ENCODE measurements at regions of chr1 and their contacts with region 1.

Region 1: GRCh38 chr1:12434174-12434573 is 183.8 kb downstream of the DHRS3 start:
- DNase-seq: peak; percentile 70
- H3K4me3 Mint-ChIP-seq: peak overlapping the region; percentile 32
- H3K27ac Mint-ChIP-seq: peak overlapping the region; percentile 92
- H3K4me1 Mint-ChIP-seq: peaks cover 67% of the 10 kb centered on the region
- H3K27me3 Mint-ChIP-seq: peaks cover 3% of the 10 kb centered on the region

Region 2: GRCh38 chr1:12040457-12041051 is 393.6 kb before region 1 on chr1:
- intact Hi-C with region 1: loop called (anchors 1 kb)
- DNase-seq: no peak
- H3K4me3 Mint-ChIP-seq: no peak overlapping the region
- H3K27ac Mint-ChIP-seq: peak overlapping the region; percentile 29
- H3K4me1 Mint-ChIP-seq: peaks cover 48% of the 10 kb centered on the region
- H3K27me3 Mint-ChIP-seq: no peaks in the 10 kb centered on the region

Region 3: DNA sequence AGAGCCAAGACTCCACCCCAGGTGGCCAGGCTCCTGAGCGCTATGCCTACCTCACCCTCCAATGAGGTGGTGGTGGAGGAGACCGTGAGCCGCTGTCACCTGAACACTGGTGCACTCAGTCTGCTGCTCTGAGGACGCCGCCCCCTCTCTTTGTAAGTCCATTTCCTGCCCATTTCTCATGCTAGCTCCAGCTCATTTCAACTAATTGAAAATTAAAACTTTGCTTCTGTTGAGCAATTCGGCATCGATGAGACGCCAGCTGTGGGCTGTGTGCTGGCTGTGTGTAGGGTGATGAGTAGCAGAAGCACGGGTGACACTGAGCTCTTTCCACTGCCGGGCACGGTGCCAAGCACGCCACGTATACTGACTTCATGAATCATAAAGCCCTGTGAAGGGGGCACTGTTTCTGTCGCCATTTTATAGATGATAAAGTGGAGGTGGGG is 256.2 kb before region 1 on chr1:
- intact Hi-C with region 1: loop called (anchors 5 kb)
- DNase-seq: peak; percentile 62
- H3K4me3 Mint-ChIP-seq: peak overlapping the region; percentile 79
- H3K27ac Mint-ChIP-seq: peak overlapping the region; percentile 96
- H3K4me1 Mint-ChIP-seq: peaks cover 84% of the 10 kb centered on the region
- H3K27me3 Mint-ChIP-seq: no peaks in the 10 kb centered on the region

Region 4: DNA sequence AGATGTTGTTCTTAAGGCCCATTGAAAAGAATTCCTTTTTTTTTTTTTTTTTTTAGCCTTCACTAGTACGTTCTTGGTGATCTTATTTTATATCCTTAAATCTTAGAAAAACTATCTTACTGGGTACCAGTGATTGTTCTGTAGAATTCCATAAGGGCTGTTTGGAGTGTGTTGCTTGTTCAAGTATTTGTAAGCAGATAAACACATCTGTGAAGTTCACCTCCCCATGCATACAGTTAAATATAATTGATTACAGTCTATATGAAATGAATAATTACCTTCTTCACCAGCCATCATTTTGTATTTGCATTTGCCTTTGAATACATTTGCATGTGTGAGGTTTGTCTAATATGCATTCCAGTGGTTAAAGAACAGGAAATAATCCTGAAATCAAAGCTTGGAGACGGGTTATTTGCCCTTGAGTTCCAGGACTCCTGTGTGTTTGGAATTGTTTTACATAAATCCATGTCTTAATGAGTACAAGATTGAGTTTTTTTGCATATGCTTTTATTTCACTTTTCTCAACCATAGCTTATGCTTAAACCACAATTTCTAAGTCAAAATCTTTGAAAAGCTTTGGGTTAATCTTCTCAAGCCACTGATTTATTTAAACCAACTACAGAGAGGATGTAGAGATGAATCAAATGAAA is 131.3 kb before region 1 on chr1:
- intact Hi-C with region 1: no loop called
- DNase-seq: no peak
- H3K4me3 Mint-ChIP-seq: no peak overlapping the region
- H3K27ac Mint-ChIP-seq: no peak overlapping the region
- H3K4me1 Mint-ChIP-seq: peaks cover 9% of the 10 kb centered on the region
- H3K27me3 Mint-ChIP-seq: no peaks in the 10 kb centered on the region

Region 5: DNA sequence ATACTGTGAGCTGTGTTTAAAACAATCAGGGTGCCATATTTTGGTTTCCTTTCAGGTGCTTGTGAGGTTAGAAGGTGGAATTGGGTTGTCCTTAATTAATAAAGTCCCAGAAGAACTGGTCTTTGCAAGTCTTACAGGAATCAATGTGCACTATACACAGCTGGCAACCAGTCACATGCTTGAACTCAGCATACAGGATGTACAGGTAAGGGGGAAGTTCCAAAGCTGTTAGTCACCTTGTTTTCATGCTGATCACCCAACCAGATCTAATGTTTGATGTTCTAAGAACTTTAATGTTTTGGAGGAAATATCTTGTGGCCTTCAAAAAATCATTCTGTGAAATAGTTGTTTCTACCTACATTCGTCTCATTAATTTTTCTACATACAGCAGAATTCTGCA is 48.0 kb before region 1 on chr1:
- intact Hi-C with region 1: loop called (anchors 1 kb)
- DNase-seq: no peak
- H3K4me3 Mint-ChIP-seq: peak overlapping the region; percentile 38
- H3K27ac Mint-ChIP-seq: peak overlapping the region; percentile 70
- H3K4me1 Mint-ChIP-seq: peaks cover 58% of the 10 kb centered on the region
- H3K27me3 Mint-ChIP-seq: no peaks in the 10 kb centered on the region

Region 6: DNA sequence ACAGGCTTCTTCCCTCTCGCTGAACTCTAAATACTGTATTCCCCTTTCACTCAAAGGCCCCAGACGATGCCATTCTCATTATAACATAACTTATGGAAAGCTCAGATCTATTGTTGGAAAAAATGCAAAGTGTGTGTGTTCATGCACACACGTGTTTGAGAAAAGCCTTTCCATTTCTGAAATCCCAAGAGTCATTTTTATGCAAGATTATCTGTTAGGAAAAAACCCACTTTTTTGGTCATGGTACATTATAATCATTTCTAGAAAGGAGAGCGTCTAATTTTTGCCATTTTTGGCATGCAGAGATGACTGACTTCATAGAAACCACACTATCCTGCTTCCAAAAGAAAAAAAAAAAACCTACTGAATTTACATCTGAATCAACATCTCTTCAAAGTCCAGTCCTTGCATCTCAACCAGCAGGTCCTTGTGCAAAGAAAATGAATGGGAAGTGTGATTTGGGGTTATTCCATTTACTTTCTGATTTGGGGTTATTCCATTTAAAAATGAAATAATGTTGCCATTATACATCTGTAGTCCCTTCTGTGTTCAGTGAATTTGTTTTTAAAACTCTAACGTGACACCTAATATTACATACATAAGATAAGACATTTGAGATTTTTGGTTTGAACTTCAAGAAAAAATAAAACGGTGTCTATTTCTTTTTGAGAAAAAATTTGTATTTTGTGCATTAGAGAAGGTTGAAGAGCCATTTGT is 33.6 kb after region 1 on chr1:
- intact Hi-C with region 1: loop called (anchors 1 kb)
- DNase-seq: no peak
- H3K4me3 Mint-ChIP-seq: no peak overlapping the region
- H3K27ac Mint-ChIP-seq: peak overlapping the region; percentile 89
- H3K4me1 Mint-ChIP-seq: peaks cover 39% of the 10 kb centered on the region
- H3K27me3 Mint-ChIP-seq: no peaks in the 10 kb centered on the region

Region 7: GRCh38 chr1:12518931-12519692 is 84.9 kb after region 1 on chr1:
- intact Hi-C with region 1: loop called (anchors 1 kb)
- DNase-seq: peak; percentile 21
- H3K4me3 Mint-ChIP-seq: no peak overlapping the region
- H3K27ac Mint-ChIP-seq: peak overlapping the region; percentile 73
- H3K4me1 Mint-ChIP-seq: peaks cover 38% of the 10 kb centered on the region
- H3K27me3 Mint-ChIP-seq: no peaks in the 10 kb centered on the region